Panc1 (cell line): ENCODE measurements at regions of chr4 and their contacts with region 1.

Region 1: GRCh38 chr4:19983072-19983471 is 268.6 kb upstream of the SLIT2 start:
- DNase-seq: no peak
- ATAC-seq: no peak
- H3K4me3 ChIP-seq: no peak overlapping the region
- H3K27ac ChIP-seq: no peak overlapping the region
- H3K4me1 ChIP-seq: no peaks in the 10 kb centered on the region
- H3K27me3 ChIP-seq: no peaks in the 10 kb centered on the region
- CTCF ChIP-seq: no peak

Region 2: GRCh38 chr4:19969492-19969891 is 13.6 kb before region 1 on chr4:
- CTCF ChIA-PET with region 1: no interaction called
- POLR2A ChIA-PET with region 1: no interaction called
- in situ Hi-C with region 1: no loop called
- intact Hi-C with region 1: loop called (anchors 1 kb)
- DNase-seq: no peak
- ATAC-seq: no peak
- H3K4me3 ChIP-seq: no peak overlapping the region
- H3K27ac ChIP-seq: no peak overlapping the region
- H3K4me1 ChIP-seq: no peaks in the 10 kb centered on the region
- H3K27me3 ChIP-seq: no peaks in the 10 kb centered on the region
- CTCF ChIP-seq: no peak

Region 3: DNA sequence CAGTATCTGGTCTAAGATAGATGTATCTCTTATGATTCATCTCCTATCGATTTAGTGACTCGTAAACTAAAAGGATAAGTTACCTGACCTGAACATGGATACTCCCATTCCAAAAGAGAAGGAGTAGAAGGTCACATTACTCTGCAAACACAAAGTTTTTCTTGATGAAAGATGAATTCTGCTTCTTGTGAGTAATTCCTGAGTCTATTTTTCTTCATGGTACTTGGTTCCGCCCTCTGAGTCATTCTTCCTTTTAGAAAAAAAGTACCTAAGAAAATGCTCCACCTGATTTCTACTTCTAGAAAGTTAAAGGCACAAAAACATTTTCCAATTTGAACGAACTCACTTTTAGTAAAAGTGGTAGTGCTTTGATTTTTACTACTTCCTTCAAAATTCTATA is 45.6 kb after region 1 on chr4:
- CTCF ChIA-PET with region 1: no interaction called
- POLR2A ChIA-PET with region 1: no interaction called
- in situ Hi-C with region 1: no loop called
- intact Hi-C with region 1: no loop called
- DNase-seq: no peak
- ATAC-seq: no peak
- H3K4me3 ChIP-seq: no peak overlapping the region
- H3K27ac ChIP-seq: no peak overlapping the region
- H3K4me1 ChIP-seq: no peaks in the 10 kb centered on the region
- H3K27me3 ChIP-seq: no peaks in the 10 kb centered on the region
- CTCF ChIP-seq: no peak